ENCODE measurements at regions of chr4 and their contacts with region 1.

Region 1: DNA sequence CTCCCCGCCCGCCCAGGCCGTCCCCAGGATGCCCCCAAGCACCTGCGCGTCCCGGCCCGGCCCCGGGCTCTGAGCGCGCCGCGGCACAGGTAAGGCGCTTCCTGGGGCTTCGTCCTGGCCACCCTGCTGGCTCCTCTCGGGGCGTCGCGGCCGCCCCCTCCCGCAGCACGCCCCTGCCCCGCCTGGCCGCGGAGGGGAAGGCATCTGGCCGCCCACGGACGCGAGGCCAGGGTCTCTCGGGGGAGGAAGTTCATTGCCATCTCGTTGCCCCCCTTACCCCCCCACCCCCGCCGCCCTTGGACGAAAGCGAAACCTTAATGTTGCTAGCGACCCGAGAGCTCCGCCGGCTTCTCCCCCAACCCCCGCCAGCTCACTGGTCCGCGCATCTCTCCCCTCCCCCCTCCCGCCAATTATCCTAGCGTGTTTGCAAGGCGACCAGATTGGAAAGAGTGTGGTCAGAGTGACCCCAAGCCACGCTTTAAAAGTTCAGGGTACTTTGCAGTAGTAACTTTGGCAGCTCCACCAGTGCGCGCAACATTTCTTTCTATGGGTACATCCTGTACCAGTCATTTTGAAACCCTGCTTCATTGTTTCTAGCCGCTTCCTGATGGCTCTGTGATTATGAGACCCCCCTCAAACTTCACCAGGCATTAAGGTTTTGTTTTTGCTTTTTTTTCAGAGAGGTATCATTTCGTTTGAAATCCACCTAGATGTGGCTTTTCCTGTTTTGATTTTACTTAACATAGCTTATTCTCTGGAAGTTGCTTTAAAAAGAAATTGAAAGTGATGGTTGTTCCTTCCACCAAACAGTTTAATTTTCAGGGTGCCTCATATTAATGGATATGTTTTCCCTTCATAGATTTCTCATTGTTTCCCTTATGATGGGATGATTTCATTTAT is 626 bp downstream of the TBC1D1 start:
- DNase-seq: peak; percentile 74
- H3K4me3 Mint-ChIP-seq: peak overlapping the region; percentile 89
- H3K27ac Mint-ChIP-seq: peak overlapping the region; percentile 86
- H3K4me1 Mint-ChIP-seq: peaks cover 37% of the 10 kb centered on the region
- H3K27me3 Mint-ChIP-seq: peaks cover 8% of the 10 kb centered on the region

Region 2: DNA sequence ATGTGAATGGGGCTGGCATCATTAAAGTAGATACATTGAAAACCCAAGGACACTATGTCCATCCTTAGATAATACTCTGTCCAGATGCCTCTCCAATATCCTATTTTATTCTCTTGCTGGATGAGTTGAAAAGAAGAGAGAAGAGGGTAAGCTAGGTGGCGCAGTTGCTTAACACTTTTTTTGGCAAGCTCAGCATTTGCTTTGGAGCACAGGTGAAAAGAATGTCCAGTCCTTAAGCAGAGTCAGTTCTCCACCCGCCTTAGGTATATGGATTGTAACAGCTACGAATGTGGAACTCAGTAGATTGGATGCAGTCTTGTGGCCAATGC is 438.6 kb before region 1 on chr4:
- CTCF ChIA-PET with region 1: no interaction called
- intact Hi-C with region 1: loop called (anchors 1 kb)
- DNase-seq: peak; percentile 80
- H3K4me3 Mint-ChIP-seq: peak overlapping the region; percentile 69
- H3K27ac Mint-ChIP-seq: no peak overlapping the region
- H3K4me1 Mint-ChIP-seq: peaks cover 9% of the 10 kb centered on the region
- H3K27me3 Mint-ChIP-seq: peaks cover 43% of the 10 kb centered on the region

Region 3: DNA sequence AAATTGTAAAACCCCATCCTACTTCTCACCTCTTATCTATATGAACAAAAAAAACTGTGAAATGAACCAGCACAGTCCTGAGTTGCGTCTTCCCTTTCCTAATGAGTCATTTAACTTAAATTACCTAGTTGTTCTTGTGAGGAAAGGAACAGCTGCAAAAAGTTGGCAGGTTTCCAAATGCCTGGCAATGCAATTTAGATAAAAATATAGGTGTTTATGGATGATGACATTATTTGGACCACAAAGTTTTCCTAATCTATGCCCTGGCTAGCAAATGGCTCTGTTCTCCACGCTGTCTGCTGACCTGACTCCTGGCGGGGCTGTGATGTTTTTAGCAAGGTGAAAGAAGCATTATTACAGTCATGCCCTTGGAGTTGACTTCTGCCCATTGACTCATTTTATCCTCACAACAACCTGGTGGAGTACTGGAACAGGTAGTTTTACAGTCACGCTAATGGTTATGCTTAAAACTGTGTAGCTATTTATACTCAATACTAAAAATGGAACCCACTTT is 175.6 kb before region 1 on chr4:
- CTCF ChIA-PET with region 1: no interaction called
- intact Hi-C with region 1: loop called (anchors 2 kb)
- DNase-seq: peak; percentile 80
- H3K4me3 Mint-ChIP-seq: no peak overlapping the region
- H3K27ac Mint-ChIP-seq: peak overlapping the region; percentile 77
- H3K4me1 Mint-ChIP-seq: peaks cover 17% of the 10 kb centered on the region
- H3K27me3 Mint-ChIP-seq: peaks cover 4% of the 10 kb centered on the region

Region 4: GRCh38 chr4:37852376-37852775 is 39.1 kb before region 1 on chr4:
- CTCF ChIA-PET with region 1: no interaction called
- intact Hi-C with region 1: no loop called
- DNase-seq: no peak
- H3K4me3 Mint-ChIP-seq: no peak overlapping the region
- H3K27ac Mint-ChIP-seq: no peak overlapping the region
- H3K4me1 Mint-ChIP-seq: no peaks in the 10 kb centered on the region
- H3K27me3 Mint-ChIP-seq: no peaks in the 10 kb centered on the region

Region 5: GRCh38 chr4:37873386-37873785 is 18.1 kb before region 1 on chr4:
- CTCF ChIA-PET with region 1: no interaction called
- intact Hi-C with region 1: loop called (anchors 1 kb)
- DNase-seq: no peak
- H3K4me3 Mint-ChIP-seq: no peak overlapping the region
- H3K27ac Mint-ChIP-seq: no peak overlapping the region
- H3K4me1 Mint-ChIP-seq: peaks cover 16% of the 10 kb centered on the region
- H3K27me3 Mint-ChIP-seq: no peaks in the 10 kb centered on the region

Region 6: DNA sequence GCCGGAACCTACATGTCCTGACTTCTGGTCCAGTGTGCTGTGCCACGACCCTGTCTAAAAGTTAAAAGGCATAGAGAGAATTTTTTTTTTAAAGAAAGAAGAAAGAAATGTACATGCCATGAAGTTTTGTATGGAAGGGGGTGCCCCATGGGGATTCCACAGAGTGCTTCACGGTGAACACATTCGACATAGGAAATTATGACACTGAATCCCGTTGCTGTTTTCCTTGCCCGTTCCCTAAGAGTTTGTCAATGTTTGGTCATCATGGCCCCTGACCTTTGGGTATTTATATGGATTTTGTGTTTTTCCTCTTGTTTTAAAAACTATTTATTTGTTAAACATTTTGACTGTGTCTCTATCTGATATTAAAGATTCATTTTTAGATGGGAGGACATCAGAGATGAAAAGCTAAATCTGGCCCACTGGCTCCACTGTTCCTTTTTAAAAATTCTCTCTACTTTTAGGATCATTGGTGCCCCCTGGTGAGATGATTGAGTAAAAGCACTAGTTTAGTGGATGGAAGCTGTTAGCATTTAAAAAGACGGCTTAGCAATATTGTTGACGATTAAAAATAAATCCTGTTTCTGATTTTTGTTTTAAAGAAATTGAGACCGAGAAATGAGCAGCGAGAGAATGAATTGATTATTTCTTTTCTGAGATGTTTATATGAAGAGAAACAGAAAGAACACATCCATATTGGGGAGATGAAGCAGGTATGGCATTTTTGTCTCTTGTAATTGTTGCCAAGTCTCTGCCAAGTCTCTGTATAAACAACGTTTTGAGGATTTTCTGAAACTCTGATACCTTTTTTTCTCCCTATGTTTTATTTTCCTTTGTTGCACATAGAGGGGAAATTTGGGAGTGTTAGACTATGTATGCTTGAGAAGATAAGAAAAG is 143.7 kb after region 1 on chr4:
- CTCF ChIA-PET with region 1: interaction called, 3 read pairs
- intact Hi-C with region 1: loop called (anchors 1 kb)
- DNase-seq: peak; percentile 49
- H3K4me3 Mint-ChIP-seq: no peak overlapping the region
- H3K27ac Mint-ChIP-seq: no peak overlapping the region
- H3K4me1 Mint-ChIP-seq: no peaks in the 10 kb centered on the region
- H3K27me3 Mint-ChIP-seq: no peaks in the 10 kb centered on the region

Measured in activated naive CD4-positive, alpha-beta T cell treated with anti-CD3 and anti-CD28 coated beads for 36 hours (primary cell).